Activated CD4-positive, alpha-beta T cell treated with anti-CD3 and anti-CD28 coated beads for 36 hours (primary cell): ENCODE measurements at regions of chr1 and their contacts with region 1.

Region 1: GRCh38 chr1:25430666-25431505 is at the start of gene MACO1:
- DNase-seq: peak; percentile 98
- ATAC-seq: peak; percentile 93
- H3K4me3 Mint-ChIP-seq: peak within 1 kb of the TSS; percentile 93
- H3K27ac Mint-ChIP-seq: peak within 1 kb of the TSS; percentile 99
- H3K4me1 Mint-ChIP-seq: peaks cover 47% of the 10 kb centered on the region
- H3K27me3 Mint-ChIP-seq: no peaks in the 10 kb centered on the region
- total RNA-seq, gene MACO1: 15.7 to 18.5 TPM

Region 2: GRCh38 chr1:24919791-24920532 is 510.9 kb before region 1 on chr1:
- CTCF ChIA-PET with region 1: no interaction called
- POLR2A ChIA-PET with region 1: no interaction called
- intact Hi-C with region 1: loop called in 1 of 2 experiments (anchors 2 kb)
- DNase-seq: peak; percentile 90
- ATAC-seq: peak; percentile 38
- H3K4me3 Mint-ChIP-seq: peak overlapping the region; percentile 54
- H3K27ac Mint-ChIP-seq: peak overlapping the region; percentile 97
- H3K4me1 Mint-ChIP-seq: peaks cover 69% of the 10 kb centered on the region
- H3K27me3 Mint-ChIP-seq: no peaks in the 10 kb centered on the region

Region 3: DNA sequence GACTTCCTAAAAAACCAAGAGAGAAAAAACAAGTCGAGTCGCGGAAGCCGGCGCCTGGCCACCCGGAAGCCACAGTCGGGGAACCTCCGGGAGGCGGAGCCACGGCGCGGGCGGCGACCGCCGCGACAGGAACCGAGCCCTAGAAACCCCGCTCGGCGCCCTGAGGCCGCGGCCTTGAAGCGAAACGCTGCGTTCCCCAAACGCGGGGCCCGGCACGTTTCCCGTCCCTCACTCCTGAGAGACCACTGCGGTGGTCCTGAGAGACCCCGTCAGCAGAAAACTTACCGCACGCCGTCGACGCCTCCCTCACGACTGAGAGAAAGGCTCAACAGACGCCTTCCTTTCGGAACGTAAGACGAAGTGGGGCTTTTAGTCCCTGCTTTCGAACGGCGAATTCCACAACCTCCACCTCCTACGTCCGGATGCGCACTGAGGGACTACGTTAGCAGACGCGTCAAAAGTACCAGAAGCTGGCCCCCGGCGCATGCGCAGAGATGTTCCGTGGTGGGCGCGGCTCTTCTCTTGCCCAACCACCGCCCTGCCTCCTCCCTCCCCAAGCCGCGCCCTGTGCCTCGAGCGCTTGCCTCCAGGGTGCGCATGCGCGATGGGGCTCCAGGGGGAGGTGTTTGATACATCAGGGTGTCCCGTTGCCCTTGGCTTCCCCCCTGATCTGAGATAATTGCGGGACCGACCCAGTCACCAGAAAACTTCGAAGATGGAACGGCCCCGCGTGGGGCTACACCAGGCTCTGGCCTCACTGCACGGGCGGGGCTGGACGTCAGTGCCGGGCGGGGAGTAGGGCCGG is 183.7 kb before region 1 on chr1 and contains the start of gene RSRP1:
- CTCF ChIA-PET with region 1: no interaction called
- POLR2A ChIA-PET with region 1: interaction called, 5 read pairs
- intact Hi-C with region 1: loop called in 1 of 2 experiments (anchors 1 kb)
- DNase-seq: peak; percentile 100
- ATAC-seq: peak; percentile 90
- H3K4me3 Mint-ChIP-seq: peak within 1 kb of the TSS; percentile 96
- H3K27ac Mint-ChIP-seq: peak within 1 kb of the TSS; percentile 99
- H3K4me1 Mint-ChIP-seq: peaks cover 40% of the 10 kb centered on the region
- H3K27me3 Mint-ChIP-seq: no peaks in the 10 kb centered on the region
- total RNA-seq, gene RSRP1: 86.8 to 120 TPM

Region 4: GRCh38 chr1:25347556-25347955 is 83.3 kb before region 1 on chr1:
- CTCF ChIA-PET with region 1: no interaction called
- POLR2A ChIA-PET with region 1: no interaction called
- intact Hi-C with region 1: no loop called
- DNase-seq: no peak
- ATAC-seq: no peak
- H3K4me3 Mint-ChIP-seq: no peak overlapping the region
- H3K27ac Mint-ChIP-seq: peak overlapping the region; percentile 31
- H3K4me1 Mint-ChIP-seq: peaks cover 9% of the 10 kb centered on the region
- H3K27me3 Mint-ChIP-seq: no peaks in the 10 kb centered on the region

Region 5: GRCh38 chr1:25450891-25451290 is 20.0 kb after region 1 on chr1:
- CTCF ChIA-PET with region 1: no interaction called
- POLR2A ChIA-PET with region 1: no interaction called
- intact Hi-C with region 1: no loop called
- DNase-seq: no peak
- ATAC-seq: no peak
- H3K4me3 Mint-ChIP-seq: no peak overlapping the region
- H3K27ac Mint-ChIP-seq: no peak overlapping the region
- H3K4me1 Mint-ChIP-seq: peaks cover 18% of the 10 kb centered on the region
- H3K27me3 Mint-ChIP-seq: no peaks in the 10 kb centered on the region

Region 6: DNA sequence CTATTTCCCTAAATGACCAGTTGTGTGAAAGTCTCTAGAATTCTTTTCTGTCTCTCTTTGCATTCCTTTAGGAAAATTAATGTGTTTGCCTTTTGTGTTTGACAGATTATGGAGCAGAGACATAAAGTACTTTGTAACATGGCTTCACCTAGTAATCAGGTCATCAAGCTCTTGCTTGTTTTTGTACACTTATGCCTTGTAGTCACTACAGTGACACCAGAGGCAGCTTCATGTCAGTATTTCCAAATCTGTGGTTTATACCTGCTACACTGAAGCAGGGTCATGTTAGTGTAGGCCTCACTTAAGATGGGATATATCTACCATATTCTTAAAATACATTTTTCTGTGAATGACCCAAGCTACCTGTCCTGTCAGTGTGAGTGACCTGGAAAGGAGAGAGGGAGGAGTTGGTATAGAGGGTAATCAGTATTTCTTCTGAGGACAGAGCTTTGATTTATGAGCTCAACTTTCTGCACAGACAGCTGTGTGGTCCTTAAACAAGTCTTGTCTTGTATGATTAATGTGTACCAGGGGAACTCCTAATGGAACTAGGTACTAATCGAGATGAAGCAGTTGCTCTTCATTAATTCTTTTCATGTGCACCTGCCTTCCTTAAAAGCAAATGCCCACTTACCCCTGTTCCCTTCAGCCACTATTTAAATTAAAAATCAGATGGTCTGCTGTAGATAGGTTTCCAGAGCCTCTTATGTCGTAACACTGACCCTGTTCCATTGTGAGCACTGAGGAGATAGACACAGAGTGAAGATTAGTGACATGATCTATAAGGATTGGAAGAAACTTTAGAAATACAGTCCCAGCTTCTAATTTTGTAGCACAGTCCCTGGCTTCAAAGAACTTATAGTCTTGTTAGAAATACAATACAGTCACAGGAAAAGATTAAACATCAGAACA is 45.6 kb after region 1 on chr1:
- CTCF ChIA-PET with region 1: interaction called, 4 read pairs
- POLR2A ChIA-PET with region 1: interaction called, 3 read pairs
- intact Hi-C with region 1: loop called (anchors 2 to 5 kb)
- DNase-seq: no peak
- ATAC-seq: peak; percentile 39
- H3K4me3 Mint-ChIP-seq: no peak overlapping the region
- H3K27ac Mint-ChIP-seq: peak overlapping the region; percentile 28
- H3K4me1 Mint-ChIP-seq: peaks cover 57% of the 10 kb centered on the region
- H3K27me3 Mint-ChIP-seq: no peaks in the 10 kb centered on the region

Region 7: DNA sequence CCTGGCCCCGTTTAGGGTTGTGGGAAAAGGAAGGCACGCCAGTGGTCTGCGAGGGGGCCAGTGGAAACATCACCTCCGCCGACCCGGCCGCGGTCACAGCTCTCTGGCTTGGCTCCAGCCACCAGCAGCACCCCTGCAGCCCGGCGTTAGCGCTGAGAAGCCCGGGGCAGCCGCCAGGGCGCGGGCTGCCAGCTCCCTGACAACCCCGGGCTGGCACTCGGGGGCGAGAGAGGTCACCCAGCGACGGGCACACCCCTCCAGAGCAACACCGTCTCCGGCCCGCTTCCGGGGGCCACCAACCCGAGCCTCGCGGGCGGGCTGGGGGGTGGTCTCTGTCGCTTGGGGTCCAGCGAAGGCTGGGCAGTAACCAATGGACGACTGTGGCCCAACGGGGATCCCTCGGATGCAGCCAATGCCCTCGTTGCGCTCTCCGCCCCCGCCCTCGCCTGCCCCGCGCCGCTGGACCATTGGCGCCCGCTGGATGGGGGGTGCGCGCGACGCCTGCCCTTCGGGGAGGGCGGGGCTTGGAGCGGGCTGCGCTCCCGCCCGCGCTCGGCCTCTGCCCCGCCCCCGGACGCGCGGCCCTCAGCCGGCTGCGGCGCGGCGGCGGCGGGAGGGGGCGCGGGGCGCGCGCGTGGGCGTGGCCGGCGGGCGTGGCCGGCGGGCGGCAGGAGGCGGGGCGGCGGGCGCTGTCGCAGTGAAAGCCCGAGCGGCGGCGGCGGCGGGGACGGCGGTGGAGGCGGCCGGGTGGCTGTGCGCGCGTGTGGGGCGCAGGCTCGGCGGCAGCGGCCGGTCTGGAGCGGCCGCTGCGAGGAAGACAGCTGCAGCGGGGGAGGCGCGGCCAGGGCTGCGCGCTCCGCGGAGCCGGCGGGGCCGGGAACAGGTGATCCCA is 185.5 kb after region 1 on chr1 and contains the start of gene MAN1C1:
- CTCF ChIA-PET with region 1: interaction called, 3 read pairs
- POLR2A ChIA-PET with region 1: no interaction called
- intact Hi-C with region 1: loop called in 1 of 2 experiments (anchors 1 kb)
- DNase-seq: peak; percentile 85
- ATAC-seq: peak; percentile 60
- H3K4me3 Mint-ChIP-seq: peak within 1 kb of the TSS; percentile 76
- H3K27ac Mint-ChIP-seq: peak within 1 kb of the TSS; percentile 52
- H3K4me1 Mint-ChIP-seq: peaks cover 51% of the 10 kb centered on the region
- H3K27me3 Mint-ChIP-seq: peaks cover 11% of the 10 kb centered on the region
- total RNA-seq, gene MAN1C1: 10.0 to 10.1 TPM

Region 8: DNA sequence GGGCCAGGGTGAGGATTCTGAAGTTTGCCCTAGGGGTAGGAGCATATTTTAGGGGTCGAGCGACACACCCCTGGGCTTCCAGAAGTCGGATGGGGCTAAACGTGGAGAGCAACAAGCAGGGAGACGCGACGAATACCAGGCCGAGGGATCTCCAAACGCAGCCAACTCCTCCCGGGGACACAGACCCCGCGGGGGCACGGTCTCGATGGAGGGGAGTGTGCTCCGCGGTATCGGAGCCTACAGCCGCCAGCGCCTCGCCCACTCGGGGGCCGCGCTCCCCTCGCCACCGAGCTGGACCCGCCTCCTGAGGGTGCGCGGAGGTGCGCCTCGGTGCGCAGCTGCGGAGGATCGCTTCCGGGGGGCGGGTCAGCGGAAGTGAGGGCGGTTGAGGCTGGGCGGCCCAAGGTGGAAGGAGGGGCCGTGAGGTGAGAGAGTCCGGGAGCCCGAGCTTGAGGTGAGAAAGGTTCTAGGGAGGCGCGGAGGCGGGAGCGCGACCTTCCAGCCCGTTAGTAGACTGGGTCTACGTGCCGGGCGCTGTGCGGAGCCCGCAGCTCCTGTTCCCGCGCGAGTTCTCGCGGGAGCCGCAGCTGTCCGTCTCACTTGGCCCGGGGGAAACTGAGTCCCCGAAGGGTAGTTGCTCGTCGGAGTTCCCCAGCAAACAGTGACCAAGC is 388.8 kb after region 1 on chr1 and contains the start of gene MTFR1L:
- CTCF ChIA-PET with region 1: no interaction called
- POLR2A ChIA-PET with region 1: no interaction called
- intact Hi-C with region 1: loop called (anchors 1 to 10 kb)
- DNase-seq: peak; percentile 97
- ATAC-seq: peak; percentile 92
- H3K4me3 Mint-ChIP-seq: peak within 1 kb of the TSS; percentile 87
- H3K27ac Mint-ChIP-seq: peak within 1 kb of the TSS; percentile 93
- H3K4me1 Mint-ChIP-seq: peaks cover 33% of the 10 kb centered on the region
- H3K27me3 Mint-ChIP-seq: no peaks in the 10 kb centered on the region
- total RNA-seq, gene MTFR1L: 27.7 to 30.8 TPM

Region 9: GRCh38 chr1:25905680-25906643 is 475.1 kb after region 1 on chr1 and contains the start of gene STMN1:
- CTCF ChIA-PET with region 1: no interaction called
- POLR2A ChIA-PET with region 1: no interaction called
- intact Hi-C with region 1: loop called in 1 of 2 experiments (anchors 1 kb)
- DNase-seq: peak; percentile 96
- ATAC-seq: peak; percentile 81
- H3K4me3 Mint-ChIP-seq: peak within 1 kb of the TSS; percentile 84
- H3K27ac Mint-ChIP-seq: peak within 1 kb of the TSS; percentile 83
- H3K4me1 Mint-ChIP-seq: peaks cover 25% of the 10 kb centered on the region
- H3K27me3 Mint-ChIP-seq: no peaks in the 10 kb centered on the region
- total RNA-seq, gene STMN1: 557 to 771 TPM